ENCODE measurements at regions of chr3 and their contacts with region 1.

Region 1: GRCh38 chr3:42961633-42962032 is 17.5 kb upstream of the GASK1A start:
- DNase-seq: peak; percentile 50
- H3K4me3 Mint-ChIP-seq: no peak overlapping the region
- H3K27ac Mint-ChIP-seq: no peak overlapping the region
- H3K4me1 Mint-ChIP-seq: peaks cover 20% of the 10 kb centered on the region
- H3K27me3 Mint-ChIP-seq: no peaks in the 10 kb centered on the region

Region 2: GRCh38 chr3:42979044-42979972 is 17.7 kb after region 1 on chr3 and contains the start of gene GASK1A:
- CTCF ChIA-PET with region 1: interaction called, 11 read pairs
- intact Hi-C with region 1: no loop called
- DNase-seq: peak; percentile 34
- H3K4me3 Mint-ChIP-seq: peak within 1 kb of the TSS; percentile 63
- H3K27ac Mint-ChIP-seq: no peak within 1 kb of the TSS
- H3K4me1 Mint-ChIP-seq: no peaks in the 10 kb centered on the region
- H3K27me3 Mint-ChIP-seq: peaks cover 21% of the 10 kb centered on the region
- total RNA-seq, gene GASK1A: not detected

Region 3: DNA sequence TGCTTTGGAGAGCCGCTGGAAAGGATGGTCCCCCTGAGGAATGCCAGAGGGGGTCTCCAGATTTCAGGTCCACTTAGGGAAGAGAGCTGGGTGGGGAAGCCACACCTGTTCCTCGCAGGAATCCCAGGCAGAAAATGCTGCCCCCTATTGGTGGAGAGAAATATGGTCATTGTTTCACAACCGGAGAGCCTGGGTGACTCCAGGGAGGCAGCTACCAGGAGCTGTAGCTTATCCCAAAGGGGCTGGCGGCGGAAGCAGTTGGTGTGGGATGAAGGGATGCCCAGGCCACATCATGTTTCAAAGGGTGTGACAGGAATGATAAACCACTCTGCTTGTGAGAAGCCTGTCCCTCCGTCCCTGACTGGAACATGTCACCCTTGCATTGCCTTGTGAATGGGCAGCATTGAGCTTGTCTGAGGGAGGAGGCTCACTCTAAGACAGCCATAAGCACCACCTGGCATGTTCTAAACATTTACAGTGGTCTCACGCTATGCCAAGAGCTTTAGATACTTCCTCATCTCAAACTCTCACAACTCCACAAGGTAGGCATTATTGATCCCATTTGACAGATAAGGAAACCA is 109.8 kb after region 1 on chr3:
- CTCF ChIA-PET with region 1: interaction called, 48 read pairs
- intact Hi-C with region 1: loop called (anchors 2 kb)
- DNase-seq: peak; percentile 45
- H3K4me3 Mint-ChIP-seq: no peak overlapping the region
- H3K27ac Mint-ChIP-seq: no peak overlapping the region
- H3K4me1 Mint-ChIP-seq: no peaks in the 10 kb centered on the region
- H3K27me3 Mint-ChIP-seq: no peaks in the 10 kb centered on the region

Region 4: DNA sequence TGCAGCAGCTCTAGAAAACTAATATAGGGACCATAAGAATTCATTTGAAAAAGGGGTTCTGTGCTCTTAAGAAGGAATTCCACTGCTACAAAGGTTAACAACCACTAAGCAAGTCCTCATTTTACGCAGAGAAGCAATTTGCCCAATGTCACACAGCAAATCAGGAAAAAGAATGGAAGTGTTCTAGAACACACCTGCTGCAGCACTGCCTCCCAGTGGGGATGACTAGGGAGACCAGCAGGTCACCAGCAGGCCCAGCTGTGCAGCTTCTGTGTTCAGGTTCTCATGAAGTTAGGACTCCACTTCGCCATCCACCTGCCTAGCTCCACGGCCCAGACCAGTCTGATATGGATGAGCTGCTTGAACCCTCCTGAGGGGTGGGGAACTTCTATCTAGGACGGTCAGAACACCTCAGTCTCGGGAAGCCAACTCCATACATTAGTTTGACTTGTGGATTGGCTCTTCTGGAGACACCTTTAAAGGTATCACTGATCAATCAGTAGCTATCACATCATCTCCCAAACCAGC is 125.7 kb after region 1 on chr3:
- CTCF ChIA-PET with region 1: interaction called, 17 read pairs
- intact Hi-C with region 1: loop called (anchors 5 kb)
- DNase-seq: peak; percentile 19
- H3K4me3 Mint-ChIP-seq: no peak overlapping the region
- H3K27ac Mint-ChIP-seq: no peak overlapping the region
- H3K4me1 Mint-ChIP-seq: peaks cover 3% of the 10 kb centered on the region
- H3K27me3 Mint-ChIP-seq: no peaks in the 10 kb centered on the region

Region 5: DNA sequence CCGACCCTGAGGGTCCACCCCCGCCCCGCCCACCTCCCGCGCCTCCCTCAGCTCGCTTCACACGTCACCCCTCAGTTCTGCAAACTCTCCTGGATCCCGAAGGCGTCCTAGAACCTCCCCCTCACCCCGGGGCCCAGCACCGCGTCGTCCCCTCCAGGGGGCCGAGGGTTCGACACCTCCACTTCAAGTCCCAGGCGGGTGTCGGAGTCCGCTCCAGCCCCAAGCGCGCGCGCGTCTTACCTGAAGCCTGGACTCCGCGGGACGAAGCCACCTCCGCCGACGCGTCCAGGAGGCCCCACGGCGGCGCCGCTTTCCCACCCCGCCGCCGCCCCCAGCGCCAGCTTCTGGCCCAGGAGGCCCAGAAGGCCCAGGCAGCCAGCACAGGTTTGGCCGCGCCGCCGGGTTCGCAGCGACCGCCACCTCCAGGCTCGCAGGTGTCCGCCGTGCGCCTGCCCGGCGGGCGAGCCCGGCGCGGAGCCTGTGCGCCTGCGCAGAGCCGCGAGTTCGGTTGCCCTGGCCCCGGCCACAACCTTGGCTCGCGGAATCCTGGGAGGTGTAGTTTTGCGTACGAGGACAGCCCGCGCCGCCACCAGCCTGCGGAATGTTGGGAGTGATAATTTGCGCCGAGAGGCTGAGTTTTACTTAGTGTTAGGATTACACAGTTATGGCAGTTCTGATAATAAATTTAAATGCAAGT is 144.1 kb after region 1 on chr3 and contains the start of gene POMGNT2:
- CTCF ChIA-PET with region 1: interaction called, 15 read pairs
- intact Hi-C with region 1: no loop called
- DNase-seq: peak; percentile 93
- H3K4me3 Mint-ChIP-seq: peak within 1 kb of the TSS; percentile 77
- H3K27ac Mint-ChIP-seq: no peak within 1 kb of the TSS
- H3K4me1 Mint-ChIP-seq: peaks cover 20% of the 10 kb centered on the region
- H3K27me3 Mint-ChIP-seq: no peaks in the 10 kb centered on the region
- total RNA-seq, gene POMGNT2: 7.6 to 8.0 TPM

Region 6: GRCh38 chr3:43378066-43378935 is 416.7 kb after region 1 on chr3:
- CTCF ChIA-PET with region 1: interaction called, 17 read pairs
- intact Hi-C with region 1: loop called (anchors 1 kb)
- DNase-seq: peak; percentile 84
- H3K4me3 Mint-ChIP-seq: no peak overlapping the region
- H3K27ac Mint-ChIP-seq: no peak overlapping the region
- H3K4me1 Mint-ChIP-seq: peaks cover 12% of the 10 kb centered on the region
- H3K27me3 Mint-ChIP-seq: no peaks in the 10 kb centered on the region